IMR-90 (cell line): ENCODE measurements at regions of chr1 and their contacts with region 1.

Region 1: GRCh38 chr1:53819387-53819786 is 18.7 kb downstream of the NDC1 start:
- DNase-seq: no peak
- ATAC-seq: no peak
- H3K4me3 ChIP-seq: no peak overlapping the region
- H3K27ac ChIP-seq: no peak overlapping the region
- H3K4me1 ChIP-seq: peaks cover under 1% of the 10 kb centered on the region; the same call in 1 of the 2 replicates
- H3K27me3 ChIP-seq: no peaks in the 10 kb centered on the region
- CTCF ChIP-seq: no peak
- POLR2A ChIP-seq: no peak
- RAD21 ChIP-seq: no peak

Region 2: GRCh38 chr1:53259932-53260331 is 559.5 kb before region 1 on chr1:
- CTCF ChIA-PET with region 1: no interaction called
- POLR2A ChIA-PET with region 1: no interaction called
- dilution Hi-C with region 1: no loop called
- in situ Hi-C with region 1: no loop called
- intact Hi-C with region 1: no loop called
- DNase-seq: no peak
- ATAC-seq: no peak
- H3K4me3 ChIP-seq: no peak overlapping the region
- H3K27ac ChIP-seq: no peak overlapping the region
- H3K4me1 ChIP-seq: peaks cover 3% of the 10 kb centered on the region; the same call in 1 of the 2 replicates
- H3K27me3 ChIP-seq: no peaks in the 10 kb centered on the region
- CTCF ChIP-seq: no peak
- POLR2A ChIP-seq: no peak
- RAD21 ChIP-seq: no peak

Region 3: DNA sequence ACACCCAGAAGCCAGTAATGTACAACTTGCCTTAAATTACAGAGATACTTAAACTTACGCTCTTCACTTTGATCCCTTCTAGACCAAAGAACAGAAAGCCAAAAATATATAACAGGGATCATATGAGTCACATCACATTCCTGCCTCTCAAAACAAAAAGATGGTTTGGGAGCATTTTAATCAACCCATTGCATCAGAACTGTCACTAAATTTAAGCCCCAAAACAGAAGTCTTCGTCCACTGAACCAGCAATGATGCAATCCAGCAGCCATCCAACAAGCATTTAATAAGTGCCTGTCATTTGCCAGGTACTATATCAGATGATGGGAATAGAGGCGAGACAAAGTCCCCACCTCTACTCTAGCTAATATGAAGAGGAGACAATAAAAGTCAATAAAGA is 37.7 kb before region 1 on chr1:
- CTCF ChIA-PET with region 1: no interaction called
- POLR2A ChIA-PET with region 1: no interaction called
- dilution Hi-C with region 1: no loop called
- in situ Hi-C with region 1: no loop called
- intact Hi-C with region 1: loop called (anchors 5 kb)
- DNase-seq: peak; percentile 44
- ATAC-seq: peak; percentile 46
- H3K4me3 ChIP-seq: no peak overlapping the region
- H3K27ac ChIP-seq: no peak overlapping the region
- H3K4me1 ChIP-seq: peaks cover 2% of the 10 kb centered on the region; the same call in 1 of the 2 replicates
- H3K27me3 ChIP-seq: no peaks in the 10 kb centered on the region
- CTCF ChIP-seq: no peak
- POLR2A ChIP-seq: no peak
- RAD21 ChIP-seq: no peak

Region 4: DNA sequence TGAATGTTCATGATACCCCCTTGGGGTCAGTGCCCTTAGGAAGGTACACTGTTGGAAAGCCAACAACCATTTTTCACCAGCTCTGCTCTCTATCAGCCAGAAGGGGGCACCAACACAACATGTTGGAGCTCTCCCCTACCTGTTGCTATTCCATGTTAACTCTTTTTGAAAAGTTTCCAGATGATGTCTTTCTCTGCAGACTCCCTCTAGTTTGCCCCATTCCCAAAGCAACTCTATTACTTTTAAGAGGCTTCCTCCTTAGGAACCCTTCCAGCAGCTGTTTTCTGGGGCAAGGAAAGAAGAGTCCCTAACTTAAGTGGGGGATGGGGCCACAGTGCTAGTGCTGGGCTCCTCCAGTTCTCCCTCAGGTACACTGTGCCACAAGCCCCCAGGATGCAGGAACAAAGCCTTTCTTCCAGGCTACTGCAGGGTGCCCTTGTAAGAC is 41.6 kb after region 1 on chr1:
- CTCF ChIA-PET with region 1: no interaction called
- POLR2A ChIA-PET with region 1: no interaction called
- dilution Hi-C with region 1: no loop called
- in situ Hi-C with region 1: no loop called
- intact Hi-C with region 1: no loop called
- DNase-seq: peak; percentile 61
- ATAC-seq: peak; percentile 87
- H3K4me3 ChIP-seq: no peak overlapping the region
- H3K27ac ChIP-seq: no peak overlapping the region
- H3K4me1 ChIP-seq: no peaks in the 10 kb centered on the region
- H3K27me3 ChIP-seq: no peaks in the 10 kb centered on the region
- CTCF ChIP-seq: peak; percentile 81
- POLR2A ChIP-seq: no peak
- RAD21 ChIP-seq: peak; percentile 80